ENCODE measurements at regions of chr11 and their contacts with region 1.

Region 1: DNA sequence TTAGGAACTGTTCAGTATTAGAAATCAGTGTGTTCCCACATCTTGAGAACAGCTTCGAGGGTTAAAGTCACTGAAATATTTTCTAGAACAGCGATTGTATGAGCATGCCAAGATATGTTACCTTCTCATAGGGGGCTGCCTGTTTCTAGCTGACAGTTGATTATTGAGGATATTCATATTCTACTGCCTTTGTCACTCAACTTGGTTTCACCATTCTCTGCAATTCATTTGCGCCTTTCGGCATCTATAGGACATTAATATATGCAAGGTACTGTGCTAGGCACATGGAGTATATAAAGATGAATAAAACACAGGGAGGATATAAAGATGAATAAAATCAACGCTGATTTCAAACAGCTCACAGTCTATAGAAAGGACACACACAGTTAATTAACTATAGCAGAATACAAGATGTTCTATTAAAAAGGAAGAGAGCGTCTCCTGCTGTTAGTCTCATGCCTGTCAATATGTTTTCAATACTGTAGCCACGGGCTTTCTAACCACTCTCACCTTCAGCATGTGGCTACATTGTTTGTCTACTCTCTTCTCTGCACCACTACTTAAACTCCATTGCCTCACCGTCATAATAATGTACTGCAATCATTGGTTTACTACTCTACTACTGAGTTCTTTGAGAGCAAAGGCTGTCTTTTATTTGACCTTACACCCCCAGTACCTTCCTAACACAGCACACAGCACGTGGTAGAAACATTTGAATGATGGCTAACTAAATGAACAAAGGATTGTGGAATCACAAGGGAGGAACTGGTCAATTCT is 81.9 kb downstream of the RAB30 start:
- DNase-seq: no peak
- H3K4me3 ChIP-seq: no peak overlapping the region
- H3K27ac ChIP-seq: no peak overlapping the region
- H3K4me1 ChIP-seq: peaks cover 0 to 39% (median 36%) of the 10 kb centered on the region in 4 donors
- H3K27me3 ChIP-seq: no peaks in the 10 kb centered on the region
- CTCF ChIP-seq: no peak
- EP300 ChIP-seq: no peak
- POLR2A ChIP-seq: no peak

Region 2: GRCh38 chr11:83033972-83034672 is 44.3 kb after region 1 on chr11:
- intact Hi-C with region 1: loop called (anchors 5 kb)
- DNase-seq: peak; percentile 71
- H3K4me3 ChIP-seq: peak overlapping the region; percentile 31 to 42 (median 40)
- H3K27ac ChIP-seq: peak overlapping the region; percentile 83 to 86 (median 85)
- H3K4me1 ChIP-seq: peaks cover 0 to 63% (median 50%) of the 10 kb centered on the region in 4 donors
- H3K27me3 ChIP-seq: no peaks in the 10 kb centered on the region
- CTCF ChIP-seq: no peak
- EP300 ChIP-seq: no peak
- POLR2A ChIP-seq: no peak

Measured in sigmoid colon (tissue), 7 donors.